Heart right ventricle (tissue), 16 donors: ENCODE measurements at regions of chr13 and their contacts with region 1.

Region 1: DNA sequence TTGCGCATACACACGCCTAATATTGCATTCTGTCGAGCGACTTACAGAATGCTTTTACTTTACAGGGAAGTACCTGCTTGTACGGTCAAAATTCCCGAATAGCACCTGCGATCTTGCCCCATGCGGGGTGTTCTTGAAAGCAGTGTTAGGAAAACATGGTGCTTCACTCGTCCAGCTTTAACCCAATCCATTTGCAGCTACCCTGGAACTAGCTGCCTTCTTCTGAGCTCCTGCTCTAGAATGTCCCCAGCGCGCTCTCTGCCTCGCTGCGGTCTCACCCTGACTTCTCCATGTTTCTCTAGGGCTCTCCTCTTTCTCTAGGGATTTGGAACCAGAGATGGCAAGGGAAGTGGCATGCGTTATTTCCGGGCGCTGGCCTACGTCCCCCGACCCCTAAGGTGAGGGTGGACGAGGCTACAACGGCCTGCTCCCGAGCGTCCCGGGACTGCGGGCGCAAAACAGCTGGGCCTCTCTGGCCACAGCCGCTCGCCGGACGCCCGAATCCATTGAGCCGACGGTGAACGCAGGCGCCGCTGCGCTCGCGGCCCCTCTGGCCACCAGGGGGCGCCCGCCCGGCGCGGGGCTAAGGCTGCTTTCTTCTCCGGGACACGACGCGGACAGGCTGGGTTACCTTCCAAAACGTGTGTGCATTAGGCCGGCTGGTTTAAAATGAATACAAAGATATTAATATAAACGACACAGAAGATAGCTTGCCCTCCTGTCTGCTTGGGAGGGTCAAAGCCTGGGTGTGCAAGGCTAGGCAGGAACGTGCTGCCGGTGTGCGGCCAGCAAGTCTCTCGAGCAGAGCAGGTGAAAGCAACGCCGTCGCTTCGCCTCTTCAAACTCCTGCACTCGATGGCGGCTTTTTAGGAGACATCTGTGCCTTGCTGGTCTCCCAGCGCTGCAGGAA is 1.8 kb upstream of the SPRY2 start:
- DNase-seq: peak; percentile 86 to 91
- ATAC-seq: peak; percentile 36 to 64 (median 54)
- H3K4me3 ChIP-seq: peak overlapping the region; percentile 16 to 96 (median 85)
- H3K27ac ChIP-seq: peak overlapping the region; percentile 96 to 99 (median 98)
- H3K4me1 ChIP-seq: peaks cover 0 to 36% (median 26%) of the 10 kb centered on the region in 9 donors
- H3K27me3 ChIP-seq: no peaks in the 10 kb centered on the region
- CTCF ChIP-seq: peak; percentile 35 to 100 (median 99)

Region 2: DNA sequence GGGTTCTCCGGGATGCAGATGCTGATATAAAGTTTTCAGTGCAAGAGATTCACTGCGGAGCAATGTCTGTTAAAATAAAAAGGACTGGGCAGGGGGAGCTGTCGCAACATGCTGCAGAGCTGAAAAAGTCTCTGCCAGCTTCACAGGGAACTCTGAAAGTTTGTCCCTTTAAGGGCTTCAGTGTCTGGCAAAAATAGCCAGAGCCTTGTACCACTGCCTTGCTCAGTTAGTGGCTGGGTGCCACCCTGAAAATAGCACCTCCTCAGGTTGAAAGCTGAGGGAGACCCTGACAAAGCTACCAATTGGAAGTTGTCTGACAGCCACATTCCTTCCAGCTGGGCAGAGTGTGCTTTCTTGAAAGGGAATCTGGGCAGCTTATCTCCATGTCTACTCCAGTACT is 864.8 kb before region 1 on chr13:
- intact Hi-C with region 1: no loop called
- DNase-seq: peak; percentile 29 to 49
- ATAC-seq: peak; percentile 22 to 86 (median 64)
- H3K4me3 ChIP-seq: no peak overlapping the region
- H3K27ac ChIP-seq: peak overlapping the region in 6 of 10 donors; percentile 4 to 49 (median 28)
- H3K4me1 ChIP-seq: peaks cover 0 to 33% (median 13%) of the 10 kb centered on the region in 9 donors
- H3K27me3 ChIP-seq: peaks cover 0 to 47% (median 0%) of the 10 kb centered on the region in 7 donors
- CTCF ChIP-seq: peak in 2 of 9 donors; percentile 29 to 40

Region 3: GRCh38 chr13:79631051-79631659 is 711.6 kb before region 1 on chr13:
- intact Hi-C with region 1: loop called in 1 of 10 experiments (anchors 5 kb)
- DNase-seq: peak in 1 of 2 donors; percentile 7
- ATAC-seq: peak; percentile 60 to 93 (median 78)
- H3K4me3 ChIP-seq: no peak overlapping the region
- H3K27ac ChIP-seq: peak overlapping the region in 1 of 10 donors; percentile 35
- H3K4me1 ChIP-seq: peaks cover 0 to 6% (median 0%) of the 10 kb centered on the region in 9 donors
- H3K27me3 ChIP-seq: no peaks in the 10 kb centered on the region
- CTCF ChIP-seq: peak in 8 of 9 donors; percentile 14 to 55 (median 43)

Region 4: DNA sequence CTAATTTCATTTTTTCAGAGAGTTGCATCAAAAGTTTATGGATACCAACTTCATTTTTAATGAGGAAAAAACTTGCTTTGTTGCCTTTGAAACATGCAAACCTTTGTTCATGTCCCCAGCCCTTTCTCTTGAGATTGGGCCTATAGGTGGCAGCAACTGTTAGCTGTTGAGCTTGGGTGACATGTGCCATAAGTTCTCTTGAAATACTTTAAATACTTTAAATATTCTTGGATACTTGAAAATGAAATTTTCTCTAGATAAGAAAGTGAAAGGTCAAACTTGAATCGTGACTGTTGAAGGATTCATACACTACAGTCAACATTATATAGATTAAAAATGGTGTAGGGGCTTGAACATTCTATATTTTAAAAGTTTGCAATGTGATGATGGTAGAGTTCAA is 566.9 kb before region 1 on chr13:
- intact Hi-C with region 1: loop called in 6 of 10 experiments (anchors 2 to 10 kb)
- DNase-seq: peak in 1 of 2 donors; percentile 36
- ATAC-seq: peak in 7 of 8 donors; percentile 58 to 82 (median 71)
- H3K4me3 ChIP-seq: no peak overlapping the region
- H3K27ac ChIP-seq: no peak overlapping the region
- H3K4me1 ChIP-seq: peaks cover 0 to 19% (median 0%) of the 10 kb centered on the region in 9 donors
- H3K27me3 ChIP-seq: no peaks in the 10 kb centered on the region
- CTCF ChIP-seq: peak in 8 of 9 donors; percentile 37 to 76 (median 64)

Region 5: GRCh38 chr13:79973533-79973963 is 369.2 kb before region 1 on chr13:
- intact Hi-C with region 1: loop called in 3 of 10 experiments (anchors 5 to 10 kb)
- DNase-seq: peak; percentile 22 to 62
- ATAC-seq: peak; percentile 86 to 97 (median 94)
- H3K4me3 ChIP-seq: no peak overlapping the region
- H3K27ac ChIP-seq: no peak overlapping the region
- H3K4me1 ChIP-seq: peaks cover 0 to 10% (median 0%) of the 10 kb centered on the region in 9 donors
- H3K27me3 ChIP-seq: no peaks in the 10 kb centered on the region
- CTCF ChIP-seq: peak; percentile 35 to 61 (median 54)

Region 6: GRCh38 chr13:80132741-80133601 is 209.8 kb before region 1 on chr13:
- intact Hi-C with region 1: loop called in 9 of 10 experiments (anchors 2 to 10 kb)
- DNase-seq: peak; percentile 32 to 81
- ATAC-seq: peak; percentile 83 to 97 (median 91)
- H3K4me3 ChIP-seq: peak overlapping the region in 9 of 10 donors; percentile 14 to 50 (median 37)
- H3K27ac ChIP-seq: peak overlapping the region; percentile 76 to 93 (median 86)
- H3K4me1 ChIP-seq: peaks cover 6 to 45% (median 39%) of the 10 kb centered on the region in 9 donors
- H3K27me3 ChIP-seq: no peaks in the 10 kb centered on the region
- CTCF ChIP-seq: peak in 3 of 9 donors; percentile 12 to 24 (median 23)

Region 7: DNA sequence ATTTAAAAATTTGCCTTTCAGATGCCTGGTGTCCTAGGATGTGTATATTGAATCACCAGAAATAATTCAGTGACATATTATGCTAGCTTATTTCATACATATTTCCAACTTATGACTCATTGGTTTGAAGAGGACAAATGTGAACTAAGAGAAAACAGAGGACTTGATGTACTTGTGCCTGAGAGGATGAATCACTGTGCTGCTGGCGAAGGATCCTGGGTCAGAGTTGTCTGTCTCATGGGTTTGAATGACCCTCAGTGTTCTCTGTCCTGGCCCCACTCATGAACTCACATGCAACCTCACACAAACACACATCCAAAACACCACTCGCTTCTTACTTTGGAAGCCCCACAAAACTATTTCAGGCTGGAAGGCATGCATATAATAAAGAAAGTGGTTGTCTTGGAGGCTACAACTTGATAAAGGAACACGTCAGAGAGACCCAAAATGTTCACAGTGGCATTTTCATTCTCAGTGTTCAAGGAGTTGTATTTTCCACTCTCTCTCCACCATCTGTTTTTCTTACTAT is 127.2 kb after region 1 on chr13:
- intact Hi-C with region 1: loop called in 2 of 10 experiments (anchors 5 to 10 kb)
- DNase-seq: peak; percentile 50 to 73
- ATAC-seq: peak; percentile 94 to 99 (median 98)
- H3K4me3 ChIP-seq: peak overlapping the region in 1 of 10 donors; percentile 10
- H3K27ac ChIP-seq: peak overlapping the region; percentile 67 to 90 (median 83)
- H3K4me1 ChIP-seq: peaks cover 0 to 40% (median 32%) of the 10 kb centered on the region in 9 donors
- H3K27me3 ChIP-seq: no peaks in the 10 kb centered on the region
- CTCF ChIP-seq: no peak

Region 8: DNA sequence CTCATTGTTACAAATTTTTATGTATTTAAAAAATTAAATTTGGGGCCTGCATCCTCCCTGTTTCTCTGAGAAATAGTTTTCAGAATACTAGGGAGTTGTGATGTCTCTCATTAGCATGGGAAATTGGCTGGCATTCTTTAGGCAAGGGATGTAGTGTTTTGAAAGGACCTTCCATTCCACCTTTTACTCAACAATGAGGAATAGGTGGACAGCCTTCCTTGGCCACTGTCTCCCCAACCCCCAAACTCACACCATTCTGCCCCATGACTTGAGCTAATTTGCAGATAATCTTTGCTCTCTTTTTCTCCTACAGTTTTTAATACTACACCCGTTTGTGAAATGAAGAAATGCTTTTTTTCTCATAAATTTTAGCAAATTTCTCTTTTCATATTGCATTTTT is 242.8 kb after region 1 on chr13:
- intact Hi-C with region 1: no loop called
- DNase-seq: no peak
- ATAC-seq: no peak
- H3K4me3 ChIP-seq: no peak overlapping the region
- H3K27ac ChIP-seq: no peak overlapping the region
- H3K4me1 ChIP-seq: no peaks in the 10 kb centered on the region
- H3K27me3 ChIP-seq: no peaks in the 10 kb centered on the region
- CTCF ChIP-seq: no peak

Region 9: GRCh38 chr13:80923907-80924306 is 581.2 kb after region 1 on chr13:
- intact Hi-C with region 1: loop called in 4 of 10 experiments (anchors 2 to 10 kb)
- DNase-seq: no peak
- ATAC-seq: peak in 5 of 8 donors; percentile 48 to 82 (median 71)
- H3K4me3 ChIP-seq: no peak overlapping the region
- H3K27ac ChIP-seq: peak overlapping the region in 6 of 10 donors; percentile 11 to 48 (median 27)
- H3K4me1 ChIP-seq: peaks cover 0 to 16% (median 6%) of the 10 kb centered on the region in 9 donors
- H3K27me3 ChIP-seq: no peaks in the 10 kb centered on the region
- CTCF ChIP-seq: peak in 8 of 9 donors; percentile 7 to 54 (median 29)